Panc1 (cell line): ENCODE measurements at regions of chr14 and their contacts with region 1.

Region 1: GRCh38 chr14:51989293-51990234 is at the start of gene RTRAF:
- DNase-seq: peak; percentile 47
- ATAC-seq: peak; percentile 100
- H3K4me3 ChIP-seq: peak within 1 kb of the TSS; percentile 94 to 98
- H3K27ac ChIP-seq: peak within 1 kb of the TSS; percentile 91
- H3K4me1 ChIP-seq: peaks cover 12% of the 10 kb centered on the region
- H3K27me3 ChIP-seq: no peaks in the 10 kb centered on the region; the same call in 1 of the 2 replicates
- CTCF ChIP-seq: no peak
- total RNA-seq, gene RTRAF: 93.7 TPM

Region 2: DNA sequence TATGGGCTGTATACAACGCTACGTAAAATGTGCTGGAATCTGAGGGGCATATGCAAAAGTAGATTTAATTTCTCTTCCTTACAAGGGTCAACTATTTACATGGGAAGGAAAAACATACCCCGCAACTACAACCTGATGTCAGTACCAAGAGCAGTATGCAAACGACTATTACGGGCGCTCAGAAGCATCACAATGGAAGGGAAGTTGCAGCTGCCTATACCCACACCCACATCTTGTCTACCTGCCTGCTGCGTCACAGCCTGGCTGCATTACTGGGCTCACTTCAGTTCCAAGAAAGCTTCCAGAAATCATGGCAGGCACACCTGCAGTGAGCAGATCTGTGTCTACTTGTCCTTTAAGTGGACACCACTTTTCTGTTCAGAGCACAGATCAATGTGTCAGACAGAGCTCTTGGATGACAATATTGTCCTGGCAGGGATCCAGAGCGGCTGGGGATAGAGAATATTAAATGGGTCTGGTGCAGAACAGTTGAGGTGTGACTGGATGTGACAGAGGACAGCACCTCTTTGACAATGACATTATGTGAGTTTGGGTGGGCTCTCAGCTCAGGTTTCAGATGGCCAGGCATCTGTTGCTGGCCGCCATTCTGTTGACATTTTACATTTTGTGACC is 170.7 kb before region 1 on chr14:
- CTCF ChIA-PET with region 1: no interaction called
- POLR2A ChIA-PET with region 1: no interaction called
- in situ Hi-C with region 1: no loop called
- intact Hi-C with region 1: loop called (anchors 10 kb)
- DNase-seq: no peak
- ATAC-seq: no peak
- H3K4me3 ChIP-seq: no peak overlapping the region
- H3K27ac ChIP-seq: no peak overlapping the region
- H3K4me1 ChIP-seq: no peaks in the 10 kb centered on the region
- H3K27me3 ChIP-seq: no peaks in the 10 kb centered on the region
- CTCF ChIP-seq: no peak

Region 3: GRCh38 chr14:52052288-52052943 is 62.9 kb after region 1 on chr14:
- CTCF ChIA-PET with region 1: no interaction called
- POLR2A ChIA-PET with region 1: no interaction called
- in situ Hi-C with region 1: no loop called
- intact Hi-C with region 1: no loop called
- DNase-seq: no peak
- ATAC-seq: no peak
- H3K4me3 ChIP-seq: no peak overlapping the region
- H3K27ac ChIP-seq: no peak overlapping the region
- H3K4me1 ChIP-seq: no peaks in the 10 kb centered on the region
- H3K27me3 ChIP-seq: no peaks in the 10 kb centered on the region; the same call in 1 of the 2 replicates
- CTCF ChIP-seq: no peak

Region 4: DNA sequence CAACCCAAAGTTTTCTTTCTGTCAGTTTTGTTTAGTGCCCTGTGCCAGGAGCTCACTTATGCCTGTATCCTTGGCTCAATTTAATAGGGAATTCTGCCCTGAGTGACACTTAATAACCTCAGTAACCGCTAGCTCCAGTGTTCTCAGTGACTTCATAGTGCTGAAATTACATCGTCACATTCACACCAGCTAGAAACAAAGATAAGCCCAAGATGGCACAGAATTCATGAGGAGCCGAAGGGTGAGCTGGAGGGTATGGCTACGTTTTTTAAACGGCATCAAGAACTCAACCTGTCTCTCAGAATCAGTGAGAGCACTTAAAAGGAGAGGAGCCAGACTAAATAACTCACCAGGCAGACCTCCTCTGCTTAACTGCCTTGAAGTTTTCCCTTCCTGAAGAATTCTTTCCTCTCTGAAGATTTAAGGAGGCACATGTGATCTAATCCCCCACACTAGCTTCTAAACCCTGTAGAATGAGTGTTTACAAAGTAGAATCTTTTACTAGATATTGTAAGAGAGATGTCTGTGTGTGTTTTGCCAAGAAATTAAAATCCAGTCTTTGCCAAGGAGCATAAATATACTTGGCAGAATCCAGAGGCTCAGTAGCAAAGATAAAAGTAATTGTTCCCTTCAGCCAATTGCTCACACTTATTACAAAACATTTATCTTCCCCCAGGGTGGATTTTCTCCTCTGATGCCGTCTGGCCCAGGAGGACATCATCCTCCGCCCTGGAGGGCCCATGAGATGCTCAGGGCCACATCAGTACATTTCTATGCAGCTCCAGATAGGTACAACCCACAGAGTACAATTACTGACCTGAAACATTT is 361.9 kb after region 1 on chr14:
- CTCF ChIA-PET with region 1: no interaction called
- POLR2A ChIA-PET with region 1: no interaction called
- in situ Hi-C with region 1: no loop called
- intact Hi-C with region 1: no loop called
- DNase-seq: no peak
- ATAC-seq: no peak
- H3K4me3 ChIP-seq: no peak overlapping the region
- H3K27ac ChIP-seq: no peak overlapping the region
- H3K4me1 ChIP-seq: no peaks in the 10 kb centered on the region
- H3K27me3 ChIP-seq: no peaks in the 10 kb centered on the region
- CTCF ChIP-seq: no peak

Region 5: GRCh38 chr14:52729925-52730667 is 740.5 kb after region 1 on chr14 and contains the start of gene STYX:
- CTCF ChIA-PET with region 1: no interaction called
- POLR2A ChIA-PET with region 1: no interaction called
- in situ Hi-C with region 1: no loop called
- intact Hi-C with region 1: no loop called
- DNase-seq: peak; percentile 68
- ATAC-seq: peak; percentile 99
- H3K4me3 ChIP-seq: peak within 1 kb of the TSS; percentile 85 to 91
- H3K27ac ChIP-seq: peak within 1 kb of the TSS; percentile 85
- H3K4me1 ChIP-seq: no peaks in the 10 kb centered on the region
- H3K27me3 ChIP-seq: no peaks in the 10 kb centered on the region
- CTCF ChIP-seq: no peak
- total RNA-seq, gene STYX: 20.6 TPM